ENCODE measurements at regions of chr16 and their contacts with region 1.

Region 1: GRCh38 chr16:53207810-53208752 is 153.3 kb downstream of the CHD9 start:
- DNase-seq: no peak

Region 2: GRCh38 chr16:53159781-53160436 is 48.2 kb before region 1 on chr16:
- intact Hi-C with region 1: loop called (anchors 5 kb)
- DNase-seq: no peak

Region 3: GRCh38 chr16:53172517-53172916 is 35.6 kb before region 1 on chr16:
- intact Hi-C with region 1: no loop called
- DNase-seq: no peak

Measured in cardiac septum (tissue), 1 donor.